Activated CD4-positive, alpha-beta T cell treated with anti-CD3 and anti-CD28 coated beads for 36 hours (primary cell): ENCODE measurements at regions of chr7 and their contacts with region 1.

Region 1: GRCh38 chr7:23474094-23474828 is 4.0 kb upstream of the IGF2BP3 start:
- DNase-seq: peak; percentile 94
- ATAC-seq: peak; percentile 91
- H3K4me3 Mint-ChIP-seq: peak overlapping the region; percentile 63
- H3K27ac Mint-ChIP-seq: peak overlapping the region; percentile 38
- H3K4me1 Mint-ChIP-seq: peaks cover 26% of the 10 kb centered on the region
- H3K27me3 Mint-ChIP-seq: peaks cover 57% of the 10 kb centered on the region

Region 2: DNA sequence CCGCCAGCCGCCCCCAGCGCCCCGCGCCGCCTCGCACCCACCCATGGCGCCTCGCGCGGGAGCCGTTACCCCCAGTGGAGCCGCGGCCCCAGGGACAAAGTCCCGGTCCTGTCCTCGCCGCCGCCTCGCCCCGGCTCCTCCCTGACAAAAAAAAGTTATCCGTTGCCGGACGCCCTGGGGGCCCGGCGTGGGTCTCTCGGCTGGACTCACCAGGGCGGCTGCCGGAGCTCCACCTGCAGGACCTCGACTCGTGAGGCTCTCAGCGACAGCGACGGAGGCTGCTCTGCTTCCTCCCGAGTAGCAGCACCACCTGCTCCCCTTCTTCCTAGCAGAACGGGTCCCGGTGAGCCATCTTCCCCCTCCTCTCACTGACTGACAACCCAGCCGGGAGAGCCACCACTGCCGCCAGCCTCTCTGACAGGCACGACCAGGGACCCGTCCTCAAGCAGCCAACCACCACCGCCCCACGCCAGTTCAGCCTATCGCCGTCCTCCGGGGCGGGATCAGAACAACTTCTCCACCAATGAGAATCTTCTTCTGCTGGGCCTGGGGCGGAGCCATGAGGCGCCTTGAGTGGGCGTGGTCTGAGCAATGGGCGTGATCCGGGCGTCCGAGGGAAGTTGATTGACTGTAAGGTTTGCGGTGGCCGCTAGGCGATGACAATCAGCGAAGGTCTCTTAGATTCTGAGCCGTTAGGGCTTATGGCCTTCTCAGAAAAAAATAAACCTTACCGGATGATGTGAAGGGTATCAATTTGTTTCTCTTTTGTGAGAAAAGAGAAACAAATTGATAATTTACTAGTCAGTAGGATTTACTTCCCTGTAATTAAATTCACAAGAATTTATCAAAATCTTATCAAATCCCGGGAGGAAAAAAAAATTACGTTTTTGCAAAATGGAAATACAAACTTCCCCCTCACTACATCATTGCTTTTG is 460.3 kb before region 1 on chr7 and contains the start of gene HYCC1:
- CTCF ChIA-PET with region 1: no interaction called
- POLR2A ChIA-PET with region 1: no interaction called
- intact Hi-C with region 1: loop called in 1 of 2 experiments (anchors 5 kb)
- DNase-seq: peak; percentile 99
- ATAC-seq: peak; percentile 99
- H3K4me3 Mint-ChIP-seq: peak within 1 kb of the TSS; percentile 92
- H3K27ac Mint-ChIP-seq: peak within 1 kb of the TSS; percentile 83
- H3K4me1 Mint-ChIP-seq: peaks cover 24% of the 10 kb centered on the region
- H3K27me3 Mint-ChIP-seq: peaks cover 3% of the 10 kb centered on the region
- total RNA-seq, gene HYCC1: 19.2 to 23.9 TPM

Region 3: GRCh38 chr7:23298885-23299769 is 175.1 kb before region 1 on chr7 and contains the start of gene MALSU1:
- CTCF ChIA-PET with region 1: no interaction called
- POLR2A ChIA-PET with region 1: no interaction called
- intact Hi-C with region 1: loop called in 1 of 2 experiments (anchors 1 kb)
- DNase-seq: peak; percentile 99
- ATAC-seq: peak; percentile 97
- H3K4me3 Mint-ChIP-seq: peak within 1 kb of the TSS; percentile 98
- H3K27ac Mint-ChIP-seq: peak within 1 kb of the TSS; percentile 97
- H3K4me1 Mint-ChIP-seq: peaks cover 38% of the 10 kb centered on the region
- H3K27me3 Mint-ChIP-seq: no peaks in the 10 kb centered on the region
- total RNA-seq, gene MALSU1: 97.7 to 98.4 TPM

Region 4: GRCh38 chr7:23373151-23374004 is 100.9 kb before region 1 on chr7:
- CTCF ChIA-PET with region 1: no interaction called
- POLR2A ChIA-PET with region 1: no interaction called
- intact Hi-C with region 1: loop called (anchors 1 to 2 kb)
- DNase-seq: peak; percentile 80
- ATAC-seq: peak; percentile 84
- H3K4me3 Mint-ChIP-seq: peak overlapping the region; percentile 16
- H3K27ac Mint-ChIP-seq: peak overlapping the region; percentile 84
- H3K4me1 Mint-ChIP-seq: peaks cover 65% of the 10 kb centered on the region
- H3K27me3 Mint-ChIP-seq: peaks cover 10% of the 10 kb centered on the region

Region 5: GRCh38 chr7:24283897-24284698 is 809.8 kb after region 1 on chr7 and contains the start of gene NPY:
- CTCF ChIA-PET with region 1: no interaction called
- POLR2A ChIA-PET with region 1: no interaction called
- intact Hi-C with region 1: loop called in 1 of 2 experiments (anchors 10 kb)
- DNase-seq: peak; percentile 43
- ATAC-seq: peak; percentile 25
- H3K4me3 Mint-ChIP-seq: peak within 1 kb of the TSS; percentile 55
- H3K27ac Mint-ChIP-seq: no peak within 1 kb of the TSS
- H3K4me1 Mint-ChIP-seq: peaks cover 16% of the 10 kb centered on the region
- H3K27me3 Mint-ChIP-seq: peaks cover 44% of the 10 kb centered on the region
- total RNA-seq, gene NPY: not detected